GM23248 (cell line): ENCODE measurements at regions of chr17 and their contacts with region 1.

Region 1: GRCh38 chr17:75779231-75779986 is 5.2 kb upstream of the UNK start:
- DNase-seq: peak; percentile 100
- H3K4me3 ChIP-seq: peak overlapping the region; percentile 85
- H3K27ac ChIP-seq: peak overlapping the region; percentile 95
- H3K4me1 ChIP-seq: peaks cover 26% of the 10 kb centered on the region
- H3K27me3 ChIP-seq: no peaks in the 10 kb centered on the region

Region 2: GRCh38 chr17:75412455-75413317 is 366.7 kb before region 1 on chr17:
- in situ Hi-C with region 1: no loop called
- DNase-seq: peak; percentile 78
- H3K4me3 ChIP-seq: peak overlapping the region; percentile 53
- H3K27ac ChIP-seq: no peak overlapping the region
- H3K4me1 ChIP-seq: no peaks in the 10 kb centered on the region
- H3K27me3 ChIP-seq: peaks cover 4% of the 10 kb centered on the region; the same call in 1 of the 2 replicates

Region 3: DNA sequence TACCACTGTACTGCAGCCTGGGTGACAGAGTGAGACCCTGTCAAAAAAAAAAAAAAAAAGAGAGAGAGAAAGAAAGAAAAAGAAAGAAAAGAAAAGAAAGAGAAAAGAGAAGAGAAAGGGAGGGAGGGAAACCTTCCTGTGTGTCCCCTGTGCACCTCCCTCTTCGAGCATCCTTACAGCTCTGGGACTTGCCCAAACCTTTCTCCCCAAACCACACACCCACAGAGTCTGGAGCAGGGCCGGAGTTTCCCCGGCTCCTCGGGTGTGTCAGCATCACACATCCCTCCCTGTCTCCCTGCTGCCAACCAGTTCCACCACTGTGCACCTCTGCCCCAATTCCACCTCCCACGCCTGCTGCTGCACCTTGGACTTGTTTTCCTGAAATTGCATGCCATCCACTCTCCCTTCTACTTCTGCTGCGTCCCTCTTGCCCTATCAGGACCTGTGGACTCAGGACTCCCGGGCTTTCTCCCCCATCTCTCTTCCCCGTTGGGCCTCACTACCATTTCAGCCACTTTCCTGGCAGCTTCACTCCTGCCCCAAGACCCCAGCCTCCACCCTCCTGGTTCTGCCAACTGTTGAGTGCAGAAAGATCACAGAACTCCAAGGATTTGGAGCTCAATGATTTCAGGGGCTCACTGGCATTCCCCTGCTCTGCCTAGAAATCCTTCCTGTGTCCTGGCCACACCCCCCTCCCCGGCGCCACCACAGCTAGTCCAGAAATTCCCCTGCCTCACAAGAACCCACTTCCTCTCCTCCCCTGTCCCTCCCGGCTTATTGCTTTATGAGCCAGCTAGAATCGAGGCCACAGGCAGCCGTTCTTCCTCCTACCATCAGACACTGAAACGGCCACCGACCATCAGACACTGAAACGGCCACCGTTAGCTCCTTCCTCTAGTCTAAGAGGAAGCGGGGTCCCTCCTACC is 217.5 kb after region 1 on chr17:
- in situ Hi-C with region 1: loop called (anchors 10 kb)
- DNase-seq: peak; percentile 82
- H3K4me3 ChIP-seq: no peak overlapping the region
- H3K27ac ChIP-seq: peak overlapping the region; percentile 39
- H3K4me1 ChIP-seq: peaks cover 15% of the 10 kb centered on the region
- H3K27me3 ChIP-seq: no peaks in the 10 kb centered on the region